ENCODE measurements at regions of chr3 and their contacts with region 1.

Region 1: GRCh38 chr3:138935848-138936740 is 10.8 kb downstream of the FOXL2 start:
- DNase-seq: peak; percentile 66 to 88
- H3K4me3 ChIP-seq: peak overlapping the region; percentile 60
- H3K4me3 Mint-ChIP-seq: peak overlapping the region; percentile 92
- H3K27ac Mint-ChIP-seq: peak overlapping the region; percentile 46
- H3K4me1 ChIP-seq: no peaks in the 10 kb centered on the region
- H3K4me1 Mint-ChIP-seq: no peaks in the 10 kb centered on the region
- H3K27me3 ChIP-seq: no peaks in the 10 kb centered on the region
- H3K27me3 Mint-ChIP-seq: no peaks in the 10 kb centered on the region
- CTCF ChIP-seq: peak; percentile 82 to 92

Region 2: GRCh38 chr3:138888560-138888959 is 47.5 kb before region 1 on chr3:
- CTCF ChIA-PET with region 1: no interaction called
- POLR2A ChIA-PET with region 1: no interaction called
- intact Hi-C with region 1: no loop called
- DNase-seq: no peak
- H3K4me3 ChIP-seq: no peak overlapping the region
- H3K4me3 Mint-ChIP-seq: no peak overlapping the region
- H3K27ac Mint-ChIP-seq: no peak overlapping the region
- H3K4me1 ChIP-seq: no peaks in the 10 kb centered on the region
- H3K4me1 Mint-ChIP-seq: no peaks in the 10 kb centered on the region
- H3K27me3 ChIP-seq: no peaks in the 10 kb centered on the region
- H3K27me3 Mint-ChIP-seq: no peaks in the 10 kb centered on the region
- CTCF ChIP-seq: no peak

Region 3: GRCh38 chr3:138923531-138923994 is 12.5 kb before region 1 on chr3:
- CTCF ChIA-PET with region 1: interaction called, 15 read pairs
- POLR2A ChIA-PET with region 1: no interaction called
- intact Hi-C with region 1: no loop called
- DNase-seq: peak; percentile 82 to 89
- H3K4me3 ChIP-seq: no peak overlapping the region
- H3K4me3 Mint-ChIP-seq: no peak overlapping the region
- H3K27ac Mint-ChIP-seq: no peak overlapping the region
- H3K4me1 ChIP-seq: no peaks in the 10 kb centered on the region
- H3K4me1 Mint-ChIP-seq: no peaks in the 10 kb centered on the region
- H3K27me3 ChIP-seq: no peaks in the 10 kb centered on the region
- H3K27me3 Mint-ChIP-seq: no peaks in the 10 kb centered on the region
- CTCF ChIP-seq: peak; percentile 81 to 86

Region 4: DNA sequence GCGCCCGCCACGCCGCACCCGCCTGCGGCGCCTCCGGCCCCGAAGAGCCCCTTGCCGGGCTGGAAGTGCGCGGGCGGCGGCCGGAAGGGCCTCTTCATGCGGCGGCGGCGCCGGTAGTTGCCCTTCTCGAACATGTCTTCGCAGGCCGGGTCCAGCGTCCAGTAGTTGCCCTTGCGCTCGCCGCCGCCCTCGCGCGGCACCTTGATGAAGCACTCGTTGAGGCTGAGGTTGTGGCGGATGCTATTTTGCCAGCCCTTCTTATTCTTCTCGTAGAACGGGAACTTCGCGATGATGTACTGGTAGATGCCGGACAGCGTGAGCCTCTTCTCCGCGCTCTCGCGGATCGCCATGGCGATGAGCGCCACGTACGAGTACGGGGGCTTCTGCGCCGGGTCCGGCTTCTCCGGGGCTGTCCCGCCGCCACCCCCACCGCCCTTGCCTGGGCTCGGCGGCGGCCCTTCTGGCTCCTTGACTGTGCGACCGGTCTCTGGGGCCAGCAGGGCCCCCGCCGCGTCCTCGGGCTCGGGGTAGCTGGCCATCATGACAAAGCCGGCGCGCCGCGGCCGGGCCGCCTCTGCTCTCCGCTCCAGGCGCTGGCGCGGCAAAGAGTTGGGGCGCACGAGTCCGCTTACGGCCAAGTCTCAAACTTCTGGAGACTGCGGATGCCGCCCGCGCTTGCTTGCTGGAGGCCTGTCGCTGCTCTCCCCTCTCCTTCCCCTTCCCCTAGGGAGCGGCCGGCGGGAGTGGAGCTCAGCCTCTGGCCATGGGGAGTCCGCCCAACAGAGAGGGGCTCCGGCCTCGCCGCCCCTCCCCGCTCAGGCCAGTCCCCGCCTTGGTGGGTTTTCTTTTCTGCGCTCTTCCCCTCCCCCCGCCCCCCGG is 10.3 kb after region 1 on chr3:
- CTCF ChIA-PET with region 1: interaction called, 20 read pairs
- POLR2A ChIA-PET with region 1: interaction called, 5 read pairs
- intact Hi-C with region 1: no loop called
- DNase-seq: peak in 1 of 2 experiments; percentile 66
- H3K4me3 ChIP-seq: peak overlapping the region; percentile 53
- H3K4me3 Mint-ChIP-seq: peak overlapping the region; percentile 83
- H3K27ac Mint-ChIP-seq: no peak overlapping the region
- H3K4me1 ChIP-seq: peaks cover 5% of the 10 kb centered on the region
- H3K4me1 Mint-ChIP-seq: peaks cover 8% of the 10 kb centered on the region
- H3K27me3 ChIP-seq: peaks cover 1% of the 10 kb centered on the region; the same call in 1 of the 2 replicates
- H3K27me3 Mint-ChIP-seq: peaks cover 20% of the 10 kb centered on the region
- CTCF ChIP-seq: peak; percentile 31 to 43

Region 5: DNA sequence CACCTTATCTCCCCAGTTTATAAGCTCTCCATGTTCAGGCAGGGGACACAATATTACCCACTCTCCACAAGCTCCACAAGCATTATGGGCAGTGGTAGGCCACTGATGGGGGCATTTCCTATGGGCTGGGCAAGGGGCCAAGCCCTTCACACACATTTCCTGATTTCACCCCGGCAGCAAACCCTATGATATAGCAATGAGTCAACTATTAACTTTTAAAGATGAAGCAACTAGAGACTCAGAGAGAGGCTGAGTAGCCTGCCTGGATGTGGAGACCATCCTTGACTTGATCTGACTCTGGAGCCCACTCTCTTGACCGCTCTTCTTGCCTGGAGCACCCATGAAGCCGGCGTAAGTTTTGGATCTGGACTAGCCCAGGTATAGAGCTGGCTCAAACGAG is 38.4 kb after region 1 on chr3:
- CTCF ChIA-PET with region 1: interaction called, 15 read pairs
- POLR2A ChIA-PET with region 1: no interaction called
- intact Hi-C with region 1: no loop called
- DNase-seq: no peak
- H3K4me3 ChIP-seq: no peak overlapping the region
- H3K4me3 Mint-ChIP-seq: no peak overlapping the region
- H3K27ac Mint-ChIP-seq: no peak overlapping the region
- H3K4me1 ChIP-seq: no peaks in the 10 kb centered on the region
- H3K4me1 Mint-ChIP-seq: no peaks in the 10 kb centered on the region
- H3K27me3 ChIP-seq: no peaks in the 10 kb centered on the region
- H3K27me3 Mint-ChIP-seq: peaks cover 2% of the 10 kb centered on the region
- CTCF ChIP-seq: no peak

Region 6: DNA sequence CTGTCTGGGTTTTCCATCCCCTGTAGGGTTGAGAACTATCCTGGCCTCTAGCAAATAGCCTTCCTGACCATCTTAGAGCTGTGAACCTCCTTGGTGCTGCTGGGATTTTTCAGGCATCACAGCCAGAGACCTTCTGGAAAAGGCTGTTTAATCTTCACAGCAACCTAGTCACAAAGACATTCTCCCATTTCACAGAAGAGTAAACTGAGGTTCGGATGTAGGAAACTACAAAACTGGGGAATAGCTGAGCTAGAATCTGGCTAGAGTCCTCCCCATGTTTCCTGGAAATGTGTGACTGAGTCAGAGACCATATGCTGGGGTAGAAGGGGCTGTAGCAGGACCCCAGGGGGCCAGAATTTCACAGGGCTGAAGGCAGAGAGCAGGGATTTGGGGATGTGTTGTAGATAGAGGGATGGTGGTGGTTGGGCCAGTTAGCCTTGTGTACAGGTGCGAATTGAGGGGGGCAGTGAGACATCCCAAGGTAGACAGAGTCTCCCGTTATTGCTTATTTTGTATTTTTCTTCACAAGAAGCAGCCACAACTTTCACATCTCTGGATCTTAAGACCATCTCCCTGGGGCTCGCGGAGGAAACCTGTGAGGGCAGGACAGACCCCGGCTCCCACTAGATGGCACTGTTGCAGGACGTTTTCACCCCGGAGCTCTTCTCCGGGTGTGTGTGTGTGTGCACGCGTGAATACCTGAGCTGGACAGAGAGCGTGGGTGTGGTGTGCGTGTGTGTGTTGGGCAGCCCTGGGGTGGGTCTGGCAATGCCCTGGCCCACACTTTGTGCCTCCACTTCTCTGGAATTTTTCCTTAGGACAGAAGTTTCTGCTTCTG is 175.5 kb after region 1 on chr3:
- CTCF ChIA-PET with region 1: interaction called, 7 read pairs
- POLR2A ChIA-PET with region 1: interaction called, 10 read pairs
- intact Hi-C with region 1: no loop called
- DNase-seq: peak; percentile 69 to 79
- H3K4me3 ChIP-seq: no peak overlapping the region
- H3K4me3 Mint-ChIP-seq: no peak overlapping the region
- H3K27ac Mint-ChIP-seq: no peak overlapping the region
- H3K4me1 ChIP-seq: peaks cover 7% of the 10 kb centered on the region
- H3K4me1 Mint-ChIP-seq: peaks cover 5% of the 10 kb centered on the region
- H3K27me3 ChIP-seq: no peaks in the 10 kb centered on the region
- H3K27me3 Mint-ChIP-seq: no peaks in the 10 kb centered on the region
- CTCF ChIP-seq: peak; percentile 72 to 86

Region 7: DNA sequence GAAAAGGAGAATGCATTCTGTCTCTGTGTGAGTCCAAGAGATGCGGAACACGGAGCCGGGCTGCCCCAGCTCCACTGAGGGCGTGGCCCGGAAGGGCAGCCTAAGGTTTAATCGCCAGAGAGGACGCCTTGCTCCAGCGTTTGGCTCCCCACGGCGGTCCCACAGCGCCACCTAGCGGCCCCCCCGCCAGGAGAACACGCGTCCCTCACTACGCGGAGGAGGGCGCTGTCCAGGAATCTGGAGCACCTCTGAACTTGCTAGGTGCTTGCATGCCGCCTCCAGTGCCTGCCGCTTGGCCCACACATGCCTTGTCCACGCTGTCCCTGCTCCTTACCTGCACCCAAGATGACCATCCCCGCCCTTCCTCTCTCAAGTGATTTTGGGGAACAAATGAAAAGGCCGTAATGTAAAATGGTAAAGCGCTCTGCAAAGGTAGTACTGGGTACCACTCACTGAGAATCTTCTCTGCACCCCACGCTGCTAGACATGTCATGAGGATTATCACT is 393.3 kb after region 1 on chr3:
- CTCF ChIA-PET with region 1: interaction called, 15 read pairs
- POLR2A ChIA-PET with region 1: no interaction called
- intact Hi-C with region 1: loop called (anchors 1 kb)
- DNase-seq: peak; percentile 88 to 95
- H3K4me3 ChIP-seq: peak overlapping the region; percentile 19
- H3K4me3 Mint-ChIP-seq: peak overlapping the region; percentile 46
- H3K27ac Mint-ChIP-seq: no peak overlapping the region
- H3K4me1 ChIP-seq: no peaks in the 10 kb centered on the region; the same call in 1 of the 2 replicates
- H3K4me1 Mint-ChIP-seq: no peaks in the 10 kb centered on the region
- H3K27me3 ChIP-seq: no peaks in the 10 kb centered on the region; the same call in 1 of the 2 replicates
- H3K27me3 Mint-ChIP-seq: peaks cover 12% of the 10 kb centered on the region
- CTCF ChIP-seq: peak; percentile 97 to 99